IMR-90 (cell line): ENCODE measurements at regions of chr22 and their contacts with region 1.

Region 1: GRCh38 chr22:39808081-39808480 is 85.5 kb downstream of the ENTHD1 start:
- DNase-seq: peak; percentile 6
- ATAC-seq: peak; percentile 35; the same call in 1 of the 2 replicates
- H3K4me3 ChIP-seq: no peak overlapping the region
- H3K27ac ChIP-seq: no peak overlapping the region
- H3K4me1 ChIP-seq: no peaks in the 10 kb centered on the region
- H3K27me3 ChIP-seq: peaks cover 67% of the 10 kb centered on the region
- CTCF ChIP-seq: peak; percentile 39
- POLR2A ChIP-seq: no peak
- RAD21 ChIP-seq: peak; percentile 35; the same call in 1 of the 2 replicates

Region 2: DNA sequence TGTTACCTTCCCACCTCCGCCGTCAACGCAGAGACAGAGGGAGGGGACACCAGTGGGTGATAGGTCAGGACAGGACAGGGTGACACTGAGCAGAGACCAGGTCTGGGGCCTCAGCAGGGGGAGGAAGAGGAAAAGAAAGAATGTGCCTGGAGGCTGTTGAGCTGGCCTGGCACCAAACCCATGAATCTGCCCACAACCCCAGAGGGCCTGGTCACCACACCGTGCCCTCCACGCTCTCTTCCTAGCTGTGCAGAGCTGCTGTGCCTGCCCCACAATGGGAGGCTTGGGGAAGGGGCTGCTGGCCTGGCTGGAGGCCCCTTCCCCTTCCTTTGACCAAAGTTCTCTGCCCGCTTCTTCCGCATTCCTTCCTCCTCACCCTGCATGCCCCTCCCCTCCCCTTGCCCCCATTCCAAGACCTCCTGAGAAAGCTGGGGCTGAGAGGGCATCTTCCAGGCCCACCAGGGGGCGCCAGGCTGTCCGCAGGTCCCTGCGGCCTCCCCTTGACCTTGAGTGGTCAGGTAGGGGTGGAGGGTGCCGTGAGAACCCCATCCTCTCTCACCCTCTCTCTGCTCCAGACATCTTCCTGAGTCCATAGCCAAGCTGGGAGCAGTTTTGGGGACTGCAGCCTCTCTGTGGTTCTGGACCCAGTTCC is 248.5 kb before region 1 on chr22:
- CTCF ChIA-PET with region 1: no interaction called
- POLR2A ChIA-PET with region 1: no interaction called
- dilution Hi-C with region 1: no loop called
- in situ Hi-C with region 1: no loop called
- intact Hi-C with region 1: loop called (anchors 5 kb)
- DNase-seq: no peak
- ATAC-seq: no peak; the same call in 1 of the 2 replicates
- H3K4me3 ChIP-seq: no peak overlapping the region
- H3K27ac ChIP-seq: no peak overlapping the region
- H3K4me1 ChIP-seq: peaks cover 2% of the 10 kb centered on the region; the same call in 1 of the 2 replicates
- H3K27me3 ChIP-seq: peaks cover 75% of the 10 kb centered on the region
- CTCF ChIP-seq: peak; percentile 32; the same call in 1 of the 2 replicates
- POLR2A ChIP-seq: no peak
- RAD21 ChIP-seq: peak; percentile 38; the same call in 1 of the 2 replicates